ENCODE measurements at regions of chr1 and their contacts with region 1.

Region 1: DNA sequence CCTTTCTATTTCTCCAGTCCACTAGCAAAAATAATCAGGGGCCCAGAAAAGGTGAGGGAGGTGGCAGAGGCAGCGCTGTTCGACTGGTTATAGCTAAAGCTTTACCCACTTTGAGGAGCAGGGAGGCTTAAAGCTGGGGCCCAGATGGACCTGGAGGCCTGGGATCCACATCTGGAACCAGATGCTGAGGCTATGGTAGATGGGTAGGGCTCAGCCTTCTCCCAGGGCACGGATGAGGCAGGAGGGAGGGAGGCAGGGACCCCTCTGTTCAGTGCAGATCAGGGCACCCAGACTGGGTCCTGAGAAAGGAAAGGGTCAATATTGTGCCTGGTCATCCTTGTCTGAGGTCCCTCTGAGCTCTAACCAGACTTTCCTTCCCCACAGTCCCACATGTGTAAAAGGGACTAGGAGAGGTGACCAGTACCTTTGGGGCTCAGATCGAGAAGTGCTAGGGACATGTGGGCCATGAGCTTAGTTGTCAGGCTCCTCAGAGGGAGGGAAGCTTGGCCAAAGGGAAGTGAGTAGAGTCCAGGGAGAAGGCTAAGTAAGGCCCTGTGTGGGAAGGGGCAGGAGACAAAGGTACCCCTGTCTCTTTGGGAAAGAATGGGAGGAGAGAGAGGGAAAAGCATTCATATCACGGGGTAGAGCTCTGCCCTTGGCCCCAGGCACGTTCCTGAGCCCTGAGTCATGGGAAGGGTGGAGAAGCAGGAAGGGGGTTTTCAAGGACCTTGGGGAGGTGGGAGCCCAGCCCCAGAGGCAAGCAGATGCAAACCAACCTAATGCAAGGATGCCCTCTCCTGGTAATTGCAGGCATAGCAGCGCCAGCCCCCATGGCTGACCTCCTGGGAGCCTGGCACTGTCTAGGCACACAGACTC is 15.4 kb downstream of the LMNA start:
- DNase-seq: peak; percentile 93
- ATAC-seq: peak; percentile 65
- H3K4me3 ChIP-seq: peak overlapping the region; percentile 0 to 49
- H3K27ac ChIP-seq: peak overlapping the region; percentile 95
- H3K4me1 ChIP-seq: peaks cover 43 to 60% of the 10 kb centered on the region in 2 experiments
- H3K27me3 ChIP-seq: no peaks in the 10 kb centered on the region
- CTCF ChIP-seq: peak in 2 of 3 experiments; percentile 89 to 96; a peak in 4 of 6 replicates
- POLR2A ChIP-seq: no peak
- RAD21 ChIP-seq: no peak

Region 2: GRCh38 chr1:155934097-155934935 is 195.6 kb before region 1 on chr1 and contains the start of gene KHDC4:
- CTCF ChIA-PET with region 1: interaction called, 3 read pairs
- POLR2A ChIA-PET with region 1: no interaction called
- RAD21 ChIA-PET with region 1: interaction called in 1 of 2 experiments, 9 read pairs
- intact Hi-C with region 1: loop called (anchors 5 kb)
- DNase-seq: peak; percentile 98
- ATAC-seq: peak; percentile 89
- H3K4me3 ChIP-seq: peak within 1 kb of the TSS; percentile 99
- H3K27ac ChIP-seq: peak within 1 kb of the TSS; percentile 67
- H3K4me1 ChIP-seq: peaks cover 23 to 42% of the 10 kb centered on the region in 2 experiments
- H3K27me3 ChIP-seq: no peaks in the 10 kb centered on the region
- CTCF ChIP-seq: 0 out of 6 replicates have a peak, but pooled peaks of 1 of the 3 experiments have one; percentile 6
- POLR2A ChIP-seq: peak; percentile 81
- RAD21 ChIP-seq: no peak
- total RNA-seq, gene KHDC4: 60.7 TPM

Region 3: GRCh38 chr1:156090822-156091188 is 39.1 kb before region 1 on chr1:
- CTCF ChIA-PET with region 1: interaction called, 189 read pairs
- POLR2A ChIA-PET with region 1: interaction called, 56 read pairs
- RAD21 ChIA-PET with region 1: interaction called, 32 to 43 read pairs
- intact Hi-C with region 1: loop called (anchors 1 kb)
- DNase-seq: peak; percentile 73
- ATAC-seq: peak; percentile 95
- H3K4me3 ChIP-seq: no peak overlapping the region
- H3K27ac ChIP-seq: peak overlapping the region; percentile 40; the same call in 1 of the 2 replicates
- H3K4me1 ChIP-seq: peaks cover 18 to 30% of the 10 kb centered on the region in 2 experiments
- H3K27me3 ChIP-seq: no peaks in the 10 kb centered on the region
- CTCF ChIP-seq: peak; percentile 61 to 96 (median 80)
- POLR2A ChIP-seq: no peak
- RAD21 ChIP-seq: peak; percentile 97

Region 4: GRCh38 chr1:156096640-156097391 is 33.1 kb before region 1 on chr1:
- CTCF ChIA-PET with region 1: interaction called, 189 read pairs
- POLR2A ChIA-PET with region 1: interaction called, 56 read pairs
- RAD21 ChIA-PET with region 1: interaction called, 32 to 43 read pairs
- intact Hi-C with region 1: loop called (anchors 1 kb)
- DNase-seq: peak; percentile 54
- ATAC-seq: peak; percentile 96
- H3K4me3 ChIP-seq: no peak overlapping the region
- H3K27ac ChIP-seq: peak overlapping the region; percentile 30
- H3K4me1 ChIP-seq: peaks cover 33 to 66% of the 10 kb centered on the region in 2 experiments
- H3K27me3 ChIP-seq: no peaks in the 10 kb centered on the region
- CTCF ChIP-seq: peak in 2 of 3 experiments; percentile 98 to 99; a peak in 4 of 6 replicates
- POLR2A ChIP-seq: no peak
- RAD21 ChIP-seq: no peak

Region 5: GRCh38 chr1:156104065-156104810 is 25.7 kb before region 1 on chr1:
- CTCF ChIA-PET with region 1: interaction called, 189 read pairs
- POLR2A ChIA-PET with region 1: interaction called, 56 read pairs
- RAD21 ChIA-PET with region 1: interaction called, 9 to 43 read pairs
- intact Hi-C with region 1: loop called (anchors 1 kb)
- DNase-seq: no peak
- ATAC-seq: peak; percentile 49
- H3K4me3 ChIP-seq: peak overlapping the region; percentile 15 to 26
- H3K27ac ChIP-seq: peak overlapping the region; percentile 96
- H3K4me1 ChIP-seq: peaks cover 80 to 99% of the 10 kb centered on the region in 2 experiments
- H3K27me3 ChIP-seq: no peaks in the 10 kb centered on the region
- CTCF ChIP-seq: no peak
- POLR2A ChIP-seq: peak; percentile 27
- RAD21 ChIP-seq: no peak

Region 6: GRCh38 chr1:156114101-156114916 is 15.6 kb before region 1 on chr1 and contains the start of gene LMNA:
- CTCF ChIA-PET with region 1: interaction called, 22 read pairs
- POLR2A ChIA-PET with region 1: interaction called, 50 read pairs
- RAD21 ChIA-PET with region 1: interaction called in 1 of 2 experiments, 4 read pairs
- intact Hi-C with region 1: no loop called
- DNase-seq: peak; percentile 90
- ATAC-seq: peak; percentile 80
- H3K4me3 ChIP-seq: peak within 1 kb of the TSS; percentile 96 to 99
- H3K27ac ChIP-seq: peak within 1 kb of the TSS; percentile 76
- H3K4me1 ChIP-seq: peaks cover 59 to 77% of the 10 kb centered on the region in 2 experiments
- H3K27me3 ChIP-seq: no peaks in the 10 kb centered on the region
- CTCF ChIP-seq: no peak
- POLR2A ChIP-seq: peak; percentile 75
- RAD21 ChIP-seq: no peak
- total RNA-seq, gene LMNA: 528 TPM

Region 7: GRCh38 chr1:156146020-156146768 is 16.2 kb after region 1 on chr1:
- CTCF ChIA-PET with region 1: interaction called, 20 read pairs
- POLR2A ChIA-PET with region 1: interaction called, 3 read pairs
- RAD21 ChIA-PET with region 1: interaction called in 1 of 2 experiments, 3 read pairs
- intact Hi-C with region 1: no loop called
- DNase-seq: peak; percentile 74
- ATAC-seq: peak; percentile 82
- H3K4me3 ChIP-seq: no peak overlapping the region
- H3K27ac ChIP-seq: no peak overlapping the region
- H3K4me1 ChIP-seq: peaks cover 9 to 17% of the 10 kb centered on the region in 2 experiments
- H3K27me3 ChIP-seq: no peaks in the 10 kb centered on the region; the same call in 1 of the 2 replicates
- CTCF ChIP-seq: peak; percentile 61 to 91 (median 82)
- POLR2A ChIP-seq: no peak
- RAD21 ChIP-seq: peak; percentile 91